ENCODE measurements at regions of chr12 and their contacts with region 1.

Region 1: DNA sequence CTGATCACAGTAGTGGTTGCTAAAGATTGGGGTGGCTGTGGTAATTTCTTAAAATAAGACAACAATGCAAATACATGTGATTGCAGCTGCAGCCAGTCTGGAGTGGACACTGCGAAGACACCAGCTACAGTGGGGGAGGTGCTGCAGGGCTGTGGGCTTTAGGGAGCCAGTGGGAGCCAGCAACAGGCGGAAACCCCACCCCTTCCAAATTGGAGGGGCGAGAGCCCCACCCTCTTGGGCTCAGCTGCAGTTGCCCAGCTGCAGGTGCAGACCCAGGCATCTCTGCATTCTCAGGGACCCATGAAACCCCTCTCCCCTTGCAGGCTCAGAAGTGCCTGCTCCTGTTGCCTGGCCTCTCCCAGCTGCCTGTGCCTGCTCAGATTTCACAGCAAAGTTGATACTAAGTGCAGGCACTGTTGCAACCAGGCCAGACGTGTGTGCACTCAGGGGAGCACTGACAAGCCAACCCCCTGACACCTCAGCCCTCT is 104.8 kb downstream of the MYF5 start:
- DNase-seq: no peak
- ATAC-seq: no peak
- H3K4me3 ChIP-seq: no peak overlapping the region
- H3K4me3 Mint-ChIP-seq: no peak overlapping the region
- H3K27ac ChIP-seq: no peak overlapping the region
- H3K27ac Mint-ChIP-seq: no peak overlapping the region
- H3K4me1 ChIP-seq: no peaks in the 10 kb centered on the region
- H3K4me1 Mint-ChIP-seq: no peaks in the 10 kb centered on the region
- H3K27me3 ChIP-seq: no peaks in the 10 kb centered on the region
- H3K27me3 Mint-ChIP-seq: no peaks in the 10 kb centered on the region

Region 2: GRCh38 chr12:80853546-80853945 is 32.0 kb after region 1 on chr12:
- CTCF ChIA-PET with region 1: no interaction called
- POLR2A ChIA-PET with region 1: no interaction called
- intact Hi-C with region 1: loop called in 1 of 2 experiments (anchors 1 kb)
- DNase-seq: no peak
- ATAC-seq: no peak
- H3K4me3 ChIP-seq: no peak overlapping the region
- H3K4me3 Mint-ChIP-seq: no peak overlapping the region
- H3K27ac ChIP-seq: no peak overlapping the region
- H3K27ac Mint-ChIP-seq: no peak overlapping the region
- H3K4me1 ChIP-seq: no peaks in the 10 kb centered on the region
- H3K4me1 Mint-ChIP-seq: no peaks in the 10 kb centered on the region
- H3K27me3 ChIP-seq: no peaks in the 10 kb centered on the region
- H3K27me3 Mint-ChIP-seq: no peaks in the 10 kb centered on the region

Region 3: DNA sequence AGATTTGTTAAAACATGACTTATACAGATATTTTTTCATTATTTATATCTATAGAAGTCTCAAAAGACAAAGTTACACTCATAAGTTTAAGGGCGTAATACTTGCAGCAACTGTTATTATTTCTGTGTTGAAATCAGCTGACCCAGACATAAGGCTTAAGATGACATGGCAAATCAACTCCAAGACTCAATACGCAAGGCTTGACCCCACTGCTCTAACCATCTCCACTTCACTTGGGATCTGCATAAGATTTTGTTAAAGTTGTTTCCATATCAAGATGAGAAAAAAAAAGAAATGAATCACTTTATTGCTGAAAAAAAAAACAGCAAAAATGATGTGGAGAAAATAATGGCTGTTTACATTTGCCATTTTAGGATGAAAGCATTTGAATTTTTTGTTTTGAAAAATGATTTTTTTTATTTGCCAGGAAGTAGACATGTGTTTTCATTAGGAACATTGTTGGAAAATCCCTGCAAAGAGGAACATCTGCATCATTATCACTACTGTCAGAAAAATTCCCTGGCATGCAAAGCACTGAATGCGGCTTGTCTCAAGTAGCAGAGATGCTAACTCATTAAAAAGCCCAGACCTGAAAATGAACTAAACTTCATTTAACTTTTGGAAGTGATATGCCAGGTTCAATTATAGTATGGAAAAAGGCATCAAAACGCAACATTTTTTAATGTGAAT is 42.6 kb after region 1 on chr12:
- CTCF ChIA-PET with region 1: no interaction called
- POLR2A ChIA-PET with region 1: no interaction called
- intact Hi-C with region 1: no loop called
- DNase-seq: no peak
- ATAC-seq: no peak
- H3K4me3 ChIP-seq: no peak overlapping the region
- H3K4me3 Mint-ChIP-seq: no peak overlapping the region
- H3K27ac ChIP-seq: no peak overlapping the region
- H3K27ac Mint-ChIP-seq: no peak overlapping the region
- H3K4me1 ChIP-seq: no peaks in the 10 kb centered on the region
- H3K4me1 Mint-ChIP-seq: no peaks in the 10 kb centered on the region
- H3K27me3 ChIP-seq: no peaks in the 10 kb centered on the region
- H3K27me3 Mint-ChIP-seq: no peaks in the 10 kb centered on the region

Measured in naive thymus-derived CD4-positive, alpha-beta T cell (primary cell).